Activated CD4-positive, alpha-beta memory T cell treated with anti-CD3 and anti-CD28 coated beads, Interleukin-2, amount 10 ng/mL, durations not matched to agents 7 days and 5 days (primary cell): ENCODE measurements at regions of chr3 and their contacts with region 1.

Region 1: DNA sequence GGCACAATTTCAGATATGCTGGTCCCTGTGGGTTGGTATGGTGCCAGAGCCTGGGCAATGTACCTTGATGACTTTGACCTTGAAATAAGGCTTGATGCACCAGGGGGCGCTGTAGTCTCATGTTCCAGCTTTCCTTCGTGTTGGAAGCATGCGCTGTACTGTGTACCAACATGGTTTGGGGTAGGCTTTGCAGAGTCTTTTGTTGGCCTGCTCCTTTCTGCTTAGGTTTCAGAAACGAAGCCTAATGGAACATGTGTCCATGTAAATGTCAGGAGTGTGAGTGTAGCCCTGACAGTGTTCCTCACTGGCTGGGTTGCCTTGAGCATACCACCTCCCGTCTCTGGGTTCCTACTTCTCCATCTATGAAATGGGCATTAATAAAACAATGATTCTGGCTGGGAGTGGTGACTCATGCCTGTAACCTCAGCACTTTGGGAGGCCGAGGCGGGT is 3.6 kb upstream of the CCR4 start:
- DNase-seq: peak; percentile 94
- H3K4me3 Mint-ChIP-seq: no peak overlapping the region
- H3K27ac Mint-ChIP-seq: peak overlapping the region; percentile 21
- H3K4me1 Mint-ChIP-seq: peaks cover 49% of the 10 kb centered on the region
- H3K27me3 Mint-ChIP-seq: no peaks in the 10 kb centered on the region

Region 2: DNA sequence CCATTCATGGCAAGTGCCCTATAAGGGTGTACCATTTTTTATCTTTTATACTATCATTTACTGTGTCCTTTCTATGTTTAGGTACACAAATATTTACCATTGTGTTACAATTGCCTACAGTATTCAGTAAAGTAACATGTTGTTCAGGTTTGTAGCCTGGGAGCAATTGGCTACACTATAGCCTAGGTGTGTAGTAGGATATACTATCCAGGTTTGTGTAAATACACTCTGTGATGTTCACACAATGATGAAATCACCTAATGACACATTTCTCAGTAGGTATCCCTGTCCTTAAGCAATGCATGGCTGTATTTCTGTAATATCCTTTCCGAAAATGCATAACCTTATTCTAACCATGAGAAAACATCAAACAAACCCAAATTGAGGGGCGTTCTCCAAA is 280.7 kb before region 1 on chr3:
- CTCF ChIA-PET with region 1: no interaction called
- POLR2A ChIA-PET with region 1: no interaction called
- DNase-seq: no peak
- H3K4me3 Mint-ChIP-seq: no peak overlapping the region
- H3K27ac Mint-ChIP-seq: no peak overlapping the region
- H3K4me1 Mint-ChIP-seq: no peaks in the 10 kb centered on the region
- H3K27me3 Mint-ChIP-seq: peaks cover 8% of the 10 kb centered on the region

Region 3: GRCh38 chr3:32934150-32934742 is 13.6 kb before region 1 on chr3:
- CTCF ChIA-PET with region 1: no interaction called
- POLR2A ChIA-PET with region 1: no interaction called
- DNase-seq: no peak
- H3K4me3 Mint-ChIP-seq: no peak overlapping the region
- H3K27ac Mint-ChIP-seq: no peak overlapping the region
- H3K4me1 Mint-ChIP-seq: no peaks in the 10 kb centered on the region
- H3K27me3 Mint-ChIP-seq: peaks cover 5% of the 10 kb centered on the region

Region 4: DNA sequence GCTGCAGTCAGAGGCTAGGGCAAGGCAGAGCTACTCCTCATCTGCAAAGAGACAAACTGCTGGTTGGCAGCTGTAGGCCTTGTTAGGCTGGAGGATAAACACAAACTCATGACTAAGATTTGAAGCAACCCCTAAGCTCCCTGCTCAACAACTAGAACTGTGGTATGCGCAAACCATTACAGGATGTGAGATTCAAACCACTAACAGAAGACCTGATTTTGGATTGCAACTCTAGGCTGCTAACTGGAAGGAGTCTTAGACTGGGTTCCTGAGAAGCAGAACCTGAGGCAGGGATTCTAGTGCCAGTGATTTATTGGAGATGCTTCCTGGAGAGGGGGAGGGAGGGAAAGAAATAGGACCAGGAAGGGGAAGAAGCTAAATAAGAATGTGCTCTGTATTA is 26.2 kb after region 1 on chr3:
- CTCF ChIA-PET with region 1: interaction called, 7 read pairs
- POLR2A ChIA-PET with region 1: interaction called, 28 read pairs
- DNase-seq: peak; percentile 64
- H3K4me3 Mint-ChIP-seq: peak overlapping the region; percentile 6
- H3K27ac Mint-ChIP-seq: peak overlapping the region; percentile 90
- H3K4me1 Mint-ChIP-seq: peaks cover 60% of the 10 kb centered on the region
- H3K27me3 Mint-ChIP-seq: no peaks in the 10 kb centered on the region

Region 5: DNA sequence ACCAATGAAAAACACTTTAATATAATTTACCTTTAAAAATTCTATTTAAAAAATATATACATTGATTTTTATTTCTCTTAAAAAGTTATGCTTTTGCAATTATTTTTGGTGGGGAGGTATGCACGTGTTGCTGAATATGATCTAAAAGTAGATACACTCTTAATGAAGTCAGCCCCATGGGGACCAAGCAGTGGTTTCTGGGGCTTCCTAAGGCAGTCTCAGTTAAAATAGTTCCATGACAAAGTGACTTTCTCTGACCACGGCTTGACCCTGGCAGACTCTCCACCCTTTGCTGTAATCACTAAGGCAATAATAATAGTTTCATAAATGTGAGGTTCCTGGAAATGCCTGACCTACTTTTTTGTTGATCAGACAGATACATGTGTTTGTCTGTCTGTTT is 54.1 kb after region 1 on chr3:
- CTCF ChIA-PET with region 1: interaction called, 9 read pairs
- POLR2A ChIA-PET with region 1: interaction called, 19 read pairs
- DNase-seq: no peak
- H3K4me3 Mint-ChIP-seq: no peak overlapping the region
- H3K27ac Mint-ChIP-seq: no peak overlapping the region
- H3K4me1 Mint-ChIP-seq: peaks cover 80% of the 10 kb centered on the region
- H3K27me3 Mint-ChIP-seq: no peaks in the 10 kb centered on the region

Region 6: GRCh38 chr3:33041909-33042308 is 94.1 kb after region 1 on chr3:
- CTCF ChIA-PET with region 1: interaction called, 7 read pairs
- POLR2A ChIA-PET with region 1: interaction called, 25 read pairs
- DNase-seq: no peak
- H3K4me3 Mint-ChIP-seq: no peak overlapping the region
- H3K27ac Mint-ChIP-seq: no peak overlapping the region
- H3K4me1 Mint-ChIP-seq: peaks cover 59% of the 10 kb centered on the region
- H3K27me3 Mint-ChIP-seq: no peaks in the 10 kb centered on the region

Region 7: GRCh38 chr3:33074217-33075067 is 126.6 kb after region 1 on chr3:
- CTCF ChIA-PET with region 1: interaction called, 180 read pairs
- POLR2A ChIA-PET with region 1: interaction called, 9 read pairs
- DNase-seq: peak; percentile 75
- H3K4me3 Mint-ChIP-seq: no peak overlapping the region
- H3K27ac Mint-ChIP-seq: no peak overlapping the region
- H3K4me1 Mint-ChIP-seq: peaks cover 51% of the 10 kb centered on the region
- H3K27me3 Mint-ChIP-seq: peaks cover 2% of the 10 kb centered on the region

Region 8: GRCh38 chr3:33372218-33373081 is 424.6 kb after region 1 on chr3:
- CTCF ChIA-PET with region 1: interaction called, 25 read pairs
- POLR2A ChIA-PET with region 1: interaction called, 5 read pairs
- DNase-seq: peak; percentile 47
- H3K4me3 Mint-ChIP-seq: no peak overlapping the region
- H3K27ac Mint-ChIP-seq: no peak overlapping the region
- H3K4me1 Mint-ChIP-seq: peaks cover 5% of the 10 kb centered on the region
- H3K27me3 Mint-ChIP-seq: peaks cover 5% of the 10 kb centered on the region